ENCODE measurements at regions of chr2 and their contacts with region 1.

Region 1: GRCh38 chr2:54899576-54900200 is 150.6 kb downstream of the RTN4 start:
- DNase-seq: peak in 1 of 10 donors; percentile 51
- H3K4me3 ChIP-seq: no peak overlapping the region
- H3K27ac ChIP-seq: peak overlapping the region in 49 of 59 donors; percentile 1 to 88 (median 44)
- H3K27me3 ChIP-seq: no peaks in the 10 kb centered on the region
- CTCF ChIP-seq: peak; percentile 21 to 86 (median 68)

Region 2: DNA sequence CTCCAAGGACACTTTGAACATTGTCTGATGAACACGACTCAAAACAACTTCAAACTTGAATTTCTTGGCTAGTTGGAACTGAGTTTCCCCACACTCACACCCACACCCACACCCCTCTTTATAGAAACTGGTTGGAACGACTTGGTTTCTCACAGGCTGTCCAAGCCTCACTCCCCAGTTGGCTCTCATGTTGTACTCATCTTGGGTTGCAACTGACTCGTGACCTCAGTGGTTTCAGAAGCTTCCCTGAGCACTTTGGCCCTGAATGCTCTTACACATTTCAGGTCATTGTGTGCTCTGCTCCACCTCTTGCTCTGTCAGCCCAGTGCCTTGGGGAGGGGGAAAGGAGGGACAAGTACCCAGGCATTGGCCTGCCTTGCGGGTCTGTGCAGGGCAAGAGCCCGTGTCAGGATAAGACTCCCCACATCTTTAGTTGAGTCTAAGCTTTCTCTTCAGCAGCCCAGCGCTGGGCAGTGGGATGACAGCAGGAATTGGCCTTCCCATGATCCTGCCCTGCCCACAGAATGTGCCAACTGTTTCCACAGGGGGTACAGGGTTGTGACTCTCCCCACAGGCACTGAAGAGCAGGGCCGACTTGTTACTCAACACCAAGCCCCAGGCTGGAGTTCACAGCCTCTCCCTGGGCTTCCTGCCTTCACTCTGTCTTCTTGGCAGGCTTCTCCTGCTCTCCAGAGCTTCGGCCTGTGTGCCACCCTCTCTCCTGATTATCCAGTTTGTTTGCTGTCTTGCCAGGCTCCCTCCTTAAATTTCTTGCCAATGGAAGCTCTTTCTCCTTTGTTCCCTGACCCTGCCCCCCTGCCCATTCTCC is 45.9 kb after region 1 on chr2:
- intact Hi-C with region 1: loop called (anchors 5 kb)
- DNase-seq: peak in 5 of 10 donors; percentile 32 to 78 (median 63)
- H3K4me3 ChIP-seq: peak overlapping the region in 6 of 59 donors; percentile 5 to 60 (median 24)
- H3K27ac ChIP-seq: peak overlapping the region; percentile 20 to 93 (median 83)
- H3K27me3 ChIP-seq: no peaks in the 10 kb centered on the region
- CTCF ChIP-seq: no peak

Region 3: GRCh38 chr2:55010149-55010591 is 110.5 kb after region 1 on chr2:
- intact Hi-C with region 1: loop called (anchors 5 to 10 kb)
- DNase-seq: peak in 9 of 10 donors; percentile 50 to 76 (median 62)
- H3K4me3 ChIP-seq: peak overlapping the region; percentile 33 to 73 (median 59)
- H3K27ac ChIP-seq: peak overlapping the region; percentile 5 to 90 (median 78)
- H3K27me3 ChIP-seq: no peaks in the 10 kb centered on the region
- CTCF ChIP-seq: peak in 7 of 56 donors; percentile 6 to 40 (median 12)

Region 4: GRCh38 chr2:55014962-55015939 is 115.6 kb after region 1 on chr2:
- intact Hi-C with region 1: loop called (anchors 5 to 10 kb)
- DNase-seq: peak in 4 of 10 donors; percentile 46 to 72 (median 62)
- H3K4me3 ChIP-seq: peak overlapping the region in 3 of 59 donors; percentile 4 to 9 (median 7)
- H3K27ac ChIP-seq: peak overlapping the region in 51 of 59 donors; percentile 0 to 83 (median 55)
- H3K27me3 ChIP-seq: no peaks in the 10 kb centered on the region
- CTCF ChIP-seq: peak; percentile 40 to 89 (median 77)

Measured in dorsolateral prefrontal cortex (tissue), 120 donors.